PC-9 (cell line): ENCODE measurements at regions of chr15 and their contacts with region 1.

Region 1: DNA sequence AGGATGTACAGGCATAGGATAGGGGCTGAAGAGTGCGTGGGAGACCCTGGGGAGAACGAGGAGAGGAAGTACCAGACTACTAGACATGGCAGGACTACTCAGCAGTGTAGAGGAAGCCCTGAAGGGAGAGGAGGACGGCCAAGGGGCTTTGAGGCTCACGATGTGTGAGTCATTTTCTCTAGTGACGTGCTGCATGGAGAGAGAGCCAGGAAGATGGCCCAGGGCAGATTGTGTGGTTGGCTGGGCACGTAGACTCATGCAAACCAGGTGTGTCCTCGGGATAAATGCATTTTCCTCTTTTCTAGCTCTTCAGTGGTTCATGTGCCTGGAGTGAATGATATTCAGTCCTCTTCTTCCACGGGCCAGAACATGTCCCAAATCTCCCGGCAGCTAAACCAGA is 115.0 kb upstream of the ABHD17C start:
- DNase-seq: peak; percentile 81 to 89
- H3K4me3 ChIP-seq: no peak overlapping the region
- H3K27ac ChIP-seq: peak overlapping the region; percentile 73
- H3K4me1 ChIP-seq: peaks cover 47% of the 10 kb centered on the region
- H3K27me3 ChIP-seq: no peaks in the 10 kb centered on the region
- CTCF ChIP-seq: no peak

Region 2: GRCh38 chr15:80041494-80042253 is 538.4 kb before region 1 on chr15:
- CTCF ChIA-PET with region 1: no interaction called
- POLR2A ChIA-PET with region 1: no interaction called
- intact Hi-C with region 1: no loop called
- DNase-seq: no peak
- H3K4me3 ChIP-seq: no peak overlapping the region
- H3K27ac ChIP-seq: no peak overlapping the region
- H3K4me1 ChIP-seq: no peaks in the 10 kb centered on the region
- H3K27me3 ChIP-seq: no peaks in the 10 kb centered on the region
- CTCF ChIP-seq: no peak

Region 3: DNA sequence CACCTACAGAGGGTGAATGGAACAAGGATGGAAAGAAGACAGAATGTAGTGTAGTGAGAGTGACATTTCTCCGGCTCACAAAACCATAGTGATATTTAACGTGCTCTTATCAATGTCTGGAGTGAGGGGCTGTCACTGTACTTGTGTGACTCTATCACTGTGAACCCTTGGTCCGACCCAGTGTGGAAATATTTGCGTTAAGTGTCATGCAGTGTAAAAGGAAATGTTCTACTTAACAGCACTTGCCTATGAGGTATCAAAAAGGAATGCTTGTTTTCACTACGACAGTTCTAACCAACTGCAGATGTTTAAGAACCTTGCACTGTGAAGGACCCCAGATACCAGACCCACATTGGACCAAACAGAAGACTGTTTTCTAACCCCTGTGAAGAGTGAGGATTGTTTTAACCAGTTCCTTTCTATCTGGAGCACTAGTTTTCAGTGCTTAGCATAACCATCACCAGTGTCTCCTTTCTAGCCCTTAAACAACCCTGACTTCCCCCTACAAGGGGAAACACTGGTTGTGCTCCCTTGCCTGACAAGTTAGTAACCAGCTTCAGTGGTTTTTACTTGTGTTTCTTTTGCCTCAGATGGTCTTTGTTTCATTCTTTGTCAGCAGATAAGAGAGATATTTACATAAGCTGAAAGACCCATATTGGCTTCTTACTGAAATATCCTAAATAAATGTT is 29.7 kb before region 1 on chr15:
- CTCF ChIA-PET with region 1: no interaction called
- POLR2A ChIA-PET with region 1: interaction called, 13 read pairs
- intact Hi-C with region 1: loop called (anchors 2 kb)
- DNase-seq: peak; percentile 22 to 77
- H3K4me3 ChIP-seq: no peak overlapping the region
- H3K27ac ChIP-seq: no peak overlapping the region
- H3K4me1 ChIP-seq: peaks cover 18% of the 10 kb centered on the region
- H3K27me3 ChIP-seq: no peaks in the 10 kb centered on the region
- CTCF ChIP-seq: no peak

Region 4: DNA sequence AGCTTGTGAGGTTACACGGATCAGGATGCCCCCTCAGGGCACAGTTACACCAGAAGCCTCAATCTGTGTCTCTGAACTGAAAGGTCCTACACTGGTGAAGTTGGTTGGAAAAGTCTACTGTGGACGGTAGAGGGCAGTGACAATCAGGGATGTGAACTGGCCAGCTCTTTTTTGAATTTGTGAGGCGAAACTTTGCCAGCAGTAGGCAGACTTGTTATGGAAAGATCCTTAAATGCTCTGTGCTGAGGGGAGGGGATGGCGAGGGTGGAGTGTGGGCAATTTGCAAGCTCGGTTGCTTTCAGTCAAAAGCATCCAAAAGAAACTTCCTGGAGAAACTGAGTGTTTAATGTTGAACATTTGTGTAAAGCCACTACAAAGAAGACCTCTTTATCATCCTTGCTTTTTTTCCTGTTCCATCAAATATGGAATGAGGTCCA is 12.4 kb before region 1 on chr15:
- CTCF ChIA-PET with region 1: interaction called, 10 read pairs
- POLR2A ChIA-PET with region 1: no interaction called
- intact Hi-C with region 1: loop called (anchors 1 kb)
- DNase-seq: peak; percentile 54 to 66
- H3K4me3 ChIP-seq: no peak overlapping the region
- H3K27ac ChIP-seq: no peak overlapping the region
- H3K4me1 ChIP-seq: 0 out of 2 replicates have a peak, but pooled peaks cover 4% of the 10 kb centered on the region
- H3K27me3 ChIP-seq: no peaks in the 10 kb centered on the region
- CTCF ChIP-seq: peak; percentile 80

Region 5: GRCh38 chr15:80849308-80849707 is 269.2 kb after region 1 on chr15:
- CTCF ChIA-PET with region 1: no interaction called
- POLR2A ChIA-PET with region 1: interaction called, 5 read pairs
- intact Hi-C with region 1: loop called (anchors 10 kb)
- DNase-seq: peak; percentile 68 to 89
- H3K4me3 ChIP-seq: no peak overlapping the region
- H3K27ac ChIP-seq: peak overlapping the region; percentile 83
- H3K4me1 ChIP-seq: peaks cover 87% of the 10 kb centered on the region
- H3K27me3 ChIP-seq: no peaks in the 10 kb centered on the region
- CTCF ChIP-seq: no peak

Region 6: DNA sequence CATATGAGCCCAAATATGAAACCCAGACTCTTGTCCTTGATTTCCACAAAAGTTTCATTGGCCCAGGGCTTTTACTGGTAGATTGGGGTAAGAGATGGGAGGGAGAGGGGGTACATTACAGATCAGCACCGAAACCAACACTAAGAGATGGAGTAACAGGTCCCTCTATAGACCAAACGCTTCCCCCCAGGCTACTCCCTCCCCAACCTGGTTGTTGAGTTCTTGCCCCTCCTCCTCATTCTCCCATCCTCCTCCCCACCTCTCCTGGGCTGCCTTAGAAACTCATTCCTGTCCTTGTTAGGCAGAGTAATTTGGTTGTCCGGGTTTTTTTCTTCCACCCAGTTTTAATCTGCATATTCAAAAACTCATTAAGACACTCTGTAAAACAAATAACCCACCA is 335.4 kb after region 1 on chr15:
- CTCF ChIA-PET with region 1: no interaction called
- POLR2A ChIA-PET with region 1: no interaction called
- intact Hi-C with region 1: no loop called
- DNase-seq: no peak
- H3K4me3 ChIP-seq: no peak overlapping the region
- H3K27ac ChIP-seq: peak overlapping the region; percentile 67; the same call in 1 of the 2 replicates
- H3K4me1 ChIP-seq: peaks cover 17% of the 10 kb centered on the region
- H3K27me3 ChIP-seq: no peaks in the 10 kb centered on the region
- CTCF ChIP-seq: no peak